Activated CD4-positive, alpha-beta T cell treated with anti-CD3 and anti-CD28 coated beads, Interleukin-2, amount 10 ng/mL, durations not matched to agents 24 days and 14 days (primary cell): ENCODE measurements at regions of chr3 and their contacts with region 1.

Region 1: DNA sequence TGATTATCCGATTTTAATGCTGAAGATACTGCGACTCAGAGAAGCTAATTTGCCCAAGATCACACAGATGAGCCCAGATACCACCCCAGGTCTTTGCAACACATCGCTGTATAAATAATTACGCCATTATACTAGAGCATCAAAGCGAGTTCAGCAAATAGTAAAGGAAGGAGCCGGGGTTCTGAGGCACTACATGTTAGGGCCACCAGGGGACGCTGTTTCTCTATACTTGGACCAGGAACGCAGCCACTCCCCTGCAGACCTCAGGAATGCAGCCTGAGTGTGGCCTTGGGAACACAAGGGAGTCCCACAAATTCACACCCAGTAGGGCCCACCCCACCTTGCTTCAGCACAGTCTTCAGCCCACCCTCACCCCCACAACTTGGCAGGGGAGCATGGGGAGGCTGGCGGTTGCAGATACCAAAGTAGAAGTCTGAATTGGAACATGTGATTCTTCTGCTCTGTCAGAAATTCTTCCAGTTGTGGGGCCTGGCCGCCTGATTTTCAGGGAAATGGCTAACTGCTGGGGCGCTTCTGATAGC is 57.8 kb upstream of the RYK start:
- DNase-seq: peak; percentile 90
- H3K4me3 Mint-ChIP-seq: peak overlapping the region; percentile 29
- H3K27ac Mint-ChIP-seq: peak overlapping the region; percentile 4
- H3K4me1 Mint-ChIP-seq: peaks cover 2% of the 10 kb centered on the region
- H3K27me3 Mint-ChIP-seq: peaks cover 70% of the 10 kb centered on the region

Region 2: DNA sequence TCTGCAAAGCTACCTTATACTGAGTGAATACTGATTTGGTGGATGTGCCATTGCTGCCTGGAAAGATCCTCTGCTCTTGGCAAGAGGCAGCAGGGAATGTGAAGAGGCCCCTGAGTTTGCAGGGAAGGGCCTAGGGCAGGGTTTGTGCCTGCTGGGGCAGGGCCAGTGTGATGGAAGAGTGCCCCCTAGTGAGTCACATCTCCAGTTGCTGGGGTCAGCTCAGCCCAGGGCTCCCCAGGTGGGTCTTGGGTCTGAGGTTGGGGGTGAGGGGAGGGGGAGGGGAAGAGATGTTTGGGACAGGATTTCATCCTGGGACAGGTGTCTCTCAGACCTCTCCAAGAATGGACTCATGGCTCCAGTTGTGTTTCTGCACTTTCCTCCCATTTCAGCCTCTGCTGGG is 70.0 kb after region 1 on chr3:
- intact Hi-C with region 1: loop called (anchors 1 kb)
- DNase-seq: peak; percentile 66
- H3K4me3 Mint-ChIP-seq: no peak overlapping the region
- H3K27ac Mint-ChIP-seq: no peak overlapping the region
- H3K4me1 Mint-ChIP-seq: peaks cover 8% of the 10 kb centered on the region
- H3K27me3 Mint-ChIP-seq: peaks cover 45% of the 10 kb centered on the region

Region 3: GRCh38 chr3:134449277-134449676 is 140.9 kb after region 1 on chr3:
- intact Hi-C with region 1: no loop called
- DNase-seq: no peak
- H3K4me3 Mint-ChIP-seq: no peak overlapping the region
- H3K27ac Mint-ChIP-seq: no peak overlapping the region
- H3K4me1 Mint-ChIP-seq: no peaks in the 10 kb centered on the region
- H3K27me3 Mint-ChIP-seq: peaks cover 21% of the 10 kb centered on the region

Region 4: GRCh38 chr3:134473868-134474546 is 165.6 kb after region 1 on chr3:
- intact Hi-C with region 1: loop called (anchors 1 kb)
- DNase-seq: peak; percentile 93
- H3K4me3 Mint-ChIP-seq: no peak overlapping the region
- H3K27ac Mint-ChIP-seq: no peak overlapping the region
- H3K4me1 Mint-ChIP-seq: no peaks in the 10 kb centered on the region
- H3K27me3 Mint-ChIP-seq: no peaks in the 10 kb centered on the region